ENCODE measurements at regions of chr2 and their contacts with region 1.

Region 1: GRCh38 chr2:164495491-164496223 is 125.6 kb downstream of the GRB14 start:
- DNase-seq: peak; percentile 80

Region 2: GRCh38 chr2:163191372-163191771 is 1304.3 kb before region 1 on chr2:
- in situ Hi-C with region 1: loop called (anchors 25 kb)
- DNase-seq: peak; percentile 61

Region 3: GRCh38 chr2:164186591-164186990 is 309.1 kb before region 1 on chr2:
- in situ Hi-C with region 1: no loop called
- DNase-seq: no peak

Region 4: GRCh38 chr2:164620873-164621626 is 125.4 kb after region 1 on chr2 and contains the start of gene GRB14:
- in situ Hi-C with region 1: no loop called
- DNase-seq: peak; percentile 90

Region 5: GRCh38 chr2:164688906-164689419 is 193.3 kb after region 1 on chr2:
- in situ Hi-C with region 1: no loop called
- DNase-seq: no peak